CD8-positive, alpha-beta memory T cell (primary cell): ENCODE measurements at regions of chr19 and their contacts with region 1.

Region 1: DNA sequence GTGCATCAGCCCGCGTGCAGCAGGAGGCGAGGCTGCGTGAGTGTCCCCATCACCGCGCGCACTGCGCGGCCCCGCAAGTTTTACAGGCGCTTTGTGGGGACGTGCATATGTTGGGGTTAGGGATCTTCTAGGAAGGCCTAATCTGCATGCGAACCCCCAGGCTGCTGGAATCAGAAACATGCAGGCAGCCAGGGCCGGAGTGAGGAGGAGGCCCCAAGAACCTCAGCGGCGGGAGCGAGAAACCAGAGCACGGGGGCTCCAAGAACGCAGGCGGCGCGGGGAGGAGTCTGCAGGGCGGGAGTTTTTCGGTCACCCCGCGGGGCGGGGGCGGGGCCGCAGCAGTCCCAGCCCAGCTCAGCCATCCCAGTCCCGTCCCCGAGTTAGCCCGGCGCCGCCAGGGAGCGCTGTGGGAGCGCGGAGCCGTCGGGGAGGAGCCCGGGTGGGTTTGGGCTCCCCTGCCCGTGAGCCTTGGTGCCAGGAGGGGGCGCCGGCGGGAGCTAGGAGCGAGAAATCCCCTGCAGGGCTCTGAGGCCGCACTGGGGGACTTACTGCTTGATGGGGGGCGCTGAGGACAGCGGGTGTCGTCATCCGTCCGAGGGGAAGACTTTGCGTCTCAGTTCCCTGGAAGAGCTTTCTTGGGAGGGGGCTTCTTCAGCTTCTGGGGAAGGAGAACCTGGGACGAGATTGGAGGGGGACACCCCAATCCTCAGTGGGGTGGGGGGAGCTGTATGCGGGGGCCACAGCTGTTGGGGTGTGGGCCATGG is 933 bp upstream of the NRTN start:
- DNase-seq: peak; percentile 87 to 94 (median 89)
- H3K4me3 ChIP-seq: peak overlapping the region; percentile 75
- H3K4me3 Mint-ChIP-seq: peak overlapping the region; percentile 27 to 87 (median 67)
- H3K27ac ChIP-seq: peak overlapping the region; percentile 22
- H3K27ac Mint-ChIP-seq: peak overlapping the region in 7 of 8 donors; percentile 29 to 88 (median 79)
- H3K4me1 ChIP-seq: peaks cover 20% of the 10 kb centered on the region
- H3K4me1 Mint-ChIP-seq: peaks cover 9 to 27% (median 20%) of the 10 kb centered on the region in 3 donors
- H3K27me3 ChIP-seq: peaks cover 22% of the 10 kb centered on the region
- H3K27me3 Mint-ChIP-seq: peaks cover 11 to 26% of the 10 kb centered on the region in 2 donors

Region 2: DNA sequence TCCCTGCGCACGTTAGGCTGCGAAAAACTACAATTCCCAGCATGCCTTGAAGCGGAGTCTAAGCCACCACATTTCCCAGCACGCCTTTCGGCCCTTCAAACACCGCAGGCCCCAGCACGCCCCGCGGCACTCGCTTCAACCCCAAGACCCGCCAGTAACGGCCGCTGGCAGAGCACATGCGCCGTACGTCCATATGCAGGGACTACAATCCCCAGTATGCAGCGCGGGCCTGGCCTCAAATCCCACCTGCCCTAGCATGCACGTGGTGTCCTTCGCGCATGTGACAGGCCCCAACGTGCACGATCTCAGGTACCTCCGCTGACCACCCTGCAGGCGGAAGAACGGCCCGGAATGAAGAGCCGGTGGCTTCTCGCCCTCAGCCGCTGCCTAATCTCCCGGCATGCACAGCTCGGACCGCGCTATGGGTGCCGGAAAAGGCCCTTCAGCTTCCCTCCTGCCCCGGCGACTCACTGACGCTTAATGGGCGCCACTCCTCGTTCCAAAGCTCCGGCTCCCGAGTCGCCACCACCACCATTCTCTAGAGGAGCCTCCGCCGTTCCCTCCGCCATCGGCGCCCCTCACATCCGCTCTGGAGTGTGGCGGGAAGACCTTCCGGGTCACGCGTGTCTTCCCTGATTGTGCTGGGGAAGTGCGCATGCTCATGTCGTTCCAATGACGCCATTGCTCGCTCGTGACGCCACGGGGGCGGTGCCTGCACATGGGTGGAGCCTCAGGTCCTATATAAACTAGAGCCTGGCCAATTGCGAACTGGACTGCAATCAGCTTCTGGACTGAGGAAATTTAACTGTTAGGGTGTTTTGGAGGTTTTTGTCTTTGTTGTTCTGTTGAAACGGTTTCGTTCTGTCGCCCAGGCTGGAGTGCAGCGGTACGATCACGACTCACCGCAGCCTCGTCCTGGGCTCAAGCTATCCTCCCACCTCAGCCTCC is 13.1 kb before region 1 on chr19 and contains the start of gene DUS3L:
- CTCF ChIA-PET with region 1: interaction called, 44 read pairs
- POLR2A ChIA-PET with region 1: no interaction called
- DNase-seq: peak; percentile 93 to 97 (median 94)
- H3K4me3 ChIP-seq: peak within 1 kb of the TSS; percentile 95
- H3K4me3 Mint-ChIP-seq: peak within 1 kb of the TSS; percentile 94 to 100 (median 99)
- H3K27ac ChIP-seq: peak within 1 kb of the TSS; percentile 99
- H3K27ac Mint-ChIP-seq: peak within 1 kb of the TSS; percentile 95 to 100 (median 100)
- H3K4me1 ChIP-seq: peaks cover 14% of the 10 kb centered on the region
- H3K4me1 Mint-ChIP-seq: peaks cover 16 to 18% (median 17%) of the 10 kb centered on the region in 3 donors
- H3K27me3 ChIP-seq: no peaks in the 10 kb centered on the region
- H3K27me3 Mint-ChIP-seq: peaks cover 0 to 3% of the 10 kb centered on the region in 2 donors
- total RNA-seq, gene DUS3L: 90.9 to 93.6 TPM

Region 3: GRCh38 chr19:6021878-6022569 is 218.1 kb after region 1 on chr19:
- CTCF ChIA-PET with region 1: interaction called, 31 read pairs
- POLR2A ChIA-PET with region 1: interaction called, 3 read pairs
- DNase-seq: peak; percentile 58 to 79 (median 66)
- H3K4me3 ChIP-seq: no peak overlapping the region
- H3K4me3 Mint-ChIP-seq: no peak overlapping the region
- H3K27ac ChIP-seq: no peak overlapping the region
- H3K27ac Mint-ChIP-seq: no peak overlapping the region
- H3K4me1 ChIP-seq: no peaks in the 10 kb centered on the region
- H3K4me1 Mint-ChIP-seq: no peaks in the 10 kb centered on the region
- H3K27me3 ChIP-seq: no peaks in the 10 kb centered on the region
- H3K27me3 Mint-ChIP-seq: peaks cover 5 to 17% of the 10 kb centered on the region in 2 donors